HCT116 (cell line): ENCODE measurements at regions of chr3 and their contacts with region 1.

Region 1: GRCh38 chr3:151445273-151446001 is 15.4 kb downstream of the IGSF10 start:
- DNase-seq: no peak
- ATAC-seq: no peak
- H3K4me3 ChIP-seq: no peak overlapping the region
- H3K27ac ChIP-seq: no peak overlapping the region
- H3K4me1 ChIP-seq: no peaks in the 10 kb centered on the region
- H3K27me3 ChIP-seq: no peaks in the 10 kb centered on the region
- CTCF ChIP-seq: no peak
- POLR2A ChIP-seq: no peak
- RAD21 ChIP-seq: no peak

Region 2: DNA sequence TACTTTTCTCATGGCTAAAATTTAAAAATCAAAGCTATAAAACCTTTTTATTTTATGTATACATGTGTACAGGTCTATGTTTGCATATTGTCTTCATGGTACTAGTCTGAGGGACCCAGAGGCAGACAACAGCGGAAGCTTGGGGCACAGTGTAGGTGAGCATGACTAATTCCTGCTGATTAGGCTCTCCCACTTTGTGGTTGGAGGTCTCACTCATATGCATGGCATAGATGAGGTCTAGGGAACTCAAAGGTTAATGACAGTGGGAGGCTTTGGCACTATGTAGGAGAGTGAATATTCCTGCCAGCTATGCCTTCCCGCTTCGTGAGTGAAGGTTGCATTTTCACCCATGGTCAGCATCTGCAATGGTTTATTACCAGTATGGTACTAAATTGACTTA is 240.8 kb after region 1 on chr3:
- CTCF ChIA-PET with region 1: no interaction called
- POLR2A ChIA-PET with region 1: no interaction called
- RAD21 ChIA-PET with region 1: no interaction called
- intact Hi-C with region 1: no loop called
- DNase-seq: no peak
- ATAC-seq: peak; percentile 36; the same call in 1 of the 2 replicates
- H3K4me3 ChIP-seq: no peak overlapping the region
- H3K27ac ChIP-seq: no peak overlapping the region
- H3K4me1 ChIP-seq: no peaks in the 10 kb centered on the region
- H3K27me3 ChIP-seq: no peaks in the 10 kb centered on the region
- CTCF ChIP-seq: no peak
- POLR2A ChIP-seq: no peak
- RAD21 ChIP-seq: no peak

Region 3: DNA sequence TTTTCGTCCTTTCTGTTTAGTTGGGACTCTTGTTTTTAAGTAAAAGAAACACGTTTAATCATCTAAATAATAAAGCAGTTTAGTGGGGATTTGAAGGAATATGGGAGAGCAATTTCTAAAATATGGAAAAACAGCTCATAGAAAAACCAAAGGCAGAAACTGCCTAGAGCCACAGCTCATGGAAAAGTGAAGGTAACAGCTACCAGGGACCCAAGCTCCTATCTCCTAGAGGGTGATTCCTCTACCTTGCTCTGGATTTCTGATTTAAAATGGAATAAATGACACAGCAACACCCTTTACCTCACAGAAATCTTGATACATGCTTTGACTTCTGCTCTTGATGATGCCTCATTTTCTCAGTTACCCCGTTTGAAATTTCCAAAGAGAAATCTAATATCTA is 400.1 kb after region 1 on chr3:
- CTCF ChIA-PET with region 1: no interaction called
- POLR2A ChIA-PET with region 1: no interaction called
- RAD21 ChIA-PET with region 1: interaction called in 1 of 2 experiments, 11 read pairs
- intact Hi-C with region 1: no loop called
- DNase-seq: no peak
- ATAC-seq: no peak
- H3K4me3 ChIP-seq: no peak overlapping the region
- H3K27ac ChIP-seq: no peak overlapping the region
- H3K4me1 ChIP-seq: no peaks in the 10 kb centered on the region
- H3K27me3 ChIP-seq: no peaks in the 10 kb centered on the region
- CTCF ChIP-seq: no peak
- POLR2A ChIP-seq: no peak
- RAD21 ChIP-seq: no peak